ENCODE measurements at regions of chr20 and their contacts with region 1.

Region 1: DNA sequence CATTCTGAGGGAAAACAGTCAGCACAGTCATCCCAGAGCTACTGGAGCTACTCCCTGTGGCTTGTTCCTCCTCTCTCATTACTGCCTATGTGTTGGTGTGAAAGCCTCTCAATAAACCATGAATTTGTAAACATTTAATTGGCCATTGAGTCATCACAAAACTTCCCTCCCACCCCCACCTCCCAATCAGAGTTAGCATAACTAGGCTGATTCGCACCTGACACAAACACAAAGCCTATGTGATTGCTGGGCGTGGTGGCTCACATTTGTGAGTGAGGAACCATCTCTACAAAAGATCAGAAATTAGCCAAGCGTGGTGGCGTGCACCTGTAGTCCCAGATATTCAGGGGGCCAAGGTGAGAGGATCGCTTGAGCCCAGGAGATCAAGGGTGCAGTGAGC is 17.1 kb upstream of the SNTA1 start:
- DNase-seq: no peak

Region 2: DNA sequence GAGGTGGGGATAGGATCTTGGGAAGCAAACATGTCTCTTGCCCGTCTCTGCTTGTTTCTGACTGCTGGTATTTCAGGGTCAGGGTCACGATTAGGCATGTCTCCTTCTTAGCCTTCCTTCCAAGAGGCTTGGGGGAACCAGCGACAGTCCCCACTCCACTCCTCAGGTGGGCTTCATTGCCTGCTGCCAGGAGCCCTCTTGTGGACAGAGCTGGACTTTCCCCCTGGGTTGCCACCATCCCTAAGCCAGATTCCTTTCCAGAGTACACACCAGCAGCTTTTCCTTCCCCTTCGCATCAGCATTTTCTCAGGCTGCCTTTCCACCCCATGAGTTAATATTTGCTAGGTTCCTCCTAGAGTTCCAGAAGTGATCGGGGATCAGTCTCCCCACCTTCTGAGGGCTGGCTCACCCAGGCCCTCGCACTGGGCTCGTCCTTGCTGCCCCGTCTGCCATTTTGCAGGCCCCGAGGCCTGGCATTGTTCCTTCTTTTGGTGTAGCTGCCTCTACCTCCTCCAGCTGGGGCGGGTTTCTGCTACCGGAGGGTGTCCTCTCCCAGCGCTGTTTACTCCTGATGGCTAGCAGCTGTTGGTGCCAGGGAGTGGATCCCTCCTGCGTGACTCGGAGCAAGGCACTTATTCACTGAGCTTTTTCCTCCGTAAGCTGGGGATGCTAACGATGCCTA is 192.6 kb after region 1 on chr20:
- intact Hi-C with region 1: loop called (anchors 5 kb)
- DNase-seq: no peak

Measured in cardiac septum (tissue), 1 donor.